ENCODE measurements at regions of chr14 and their contacts with region 1.

Region 1: GRCh38 chr14:68307014-68307789 is 485.7 kb downstream of the ZFP36L1 start:
- DNase-seq: no peak
- ATAC-seq: no peak
- H3K4me3 ChIP-seq: no peak overlapping the region; the same call in 1 of the 2 replicates
- H3K27ac ChIP-seq: peak overlapping the region; percentile 98
- H3K4me1 ChIP-seq: peaks cover 53% of the 10 kb centered on the region
- H3K27me3 ChIP-seq: no peaks in the 10 kb centered on the region
- CTCF ChIP-seq: no peak
- EP300 ChIP-seq: no peak
- POLR2A ChIP-seq: no peak
- RAD21 ChIP-seq: no peak

Region 2: GRCh38 chr14:68274725-68275124 is 32.5 kb before region 1 on chr14:
- CTCF ChIA-PET with region 1: interaction called, 15 read pairs
- POLR2A ChIA-PET with region 1: interaction called, 141 read pairs
- RAD21 ChIA-PET with region 1: interaction called, 343 read pairs
- SMC1A ChIA-PET with region 1: interaction called, 115 read pairs
- in situ Hi-C with region 1: no loop called
- intact Hi-C with region 1: loop called (anchors 5 kb)
- DNase-seq: no peak
- ATAC-seq: no peak
- H3K4me3 ChIP-seq: no peak overlapping the region
- H3K27ac ChIP-seq: peak overlapping the region; percentile 91
- H3K4me1 ChIP-seq: peaks cover 78% of the 10 kb centered on the region
- H3K27me3 ChIP-seq: no peaks in the 10 kb centered on the region
- CTCF ChIP-seq: peak in 1 of 3 experiments; percentile 22; a peak in 1 of 6 replicates
- EP300 ChIP-seq: no peak
- POLR2A ChIP-seq: no peak
- RAD21 ChIP-seq: 0 out of 2 replicates have a peak, but pooled peaks have one; percentile 21

Region 3: GRCh38 chr14:68318828-68319227 is 11.6 kb after region 1 on chr14:
- CTCF ChIA-PET with region 1: interaction called, 6 read pairs
- POLR2A ChIA-PET with region 1: interaction called, 19 read pairs
- RAD21 ChIA-PET with region 1: interaction called, 9 read pairs
- SMC1A ChIA-PET with region 1: interaction called, 36 read pairs
- in situ Hi-C with region 1: no loop called
- intact Hi-C with region 1: no loop called
- DNase-seq: no peak
- ATAC-seq: peak; percentile 49
- H3K4me3 ChIP-seq: no peak overlapping the region
- H3K27ac ChIP-seq: no peak overlapping the region
- H3K4me1 ChIP-seq: peaks cover 54% of the 10 kb centered on the region
- H3K27me3 ChIP-seq: no peaks in the 10 kb centered on the region
- CTCF ChIP-seq: no peak; a peak in 1 of 6 replicates
- EP300 ChIP-seq: peak in 1 of 2 experiments; percentile 23; a peak in 1 of 4 replicates
- POLR2A ChIP-seq: no peak
- RAD21 ChIP-seq: no peak

Region 4: GRCh38 chr14:68359837-68360552 is 52.8 kb after region 1 on chr14:
- CTCF ChIA-PET with region 1: no interaction called
- POLR2A ChIA-PET with region 1: interaction called, 9 read pairs
- RAD21 ChIA-PET with region 1: interaction called, 13 read pairs
- SMC1A ChIA-PET with region 1: interaction called, 68 read pairs
- in situ Hi-C with region 1: no loop called
- intact Hi-C with region 1: no loop called
- DNase-seq: no peak
- ATAC-seq: peak; percentile 47
- H3K4me3 ChIP-seq: no peak overlapping the region
- H3K27ac ChIP-seq: peak overlapping the region; percentile 82
- H3K4me1 ChIP-seq: peaks cover 33% of the 10 kb centered on the region
- H3K27me3 ChIP-seq: no peaks in the 10 kb centered on the region
- CTCF ChIP-seq: no peak
- EP300 ChIP-seq: no peak
- POLR2A ChIP-seq: no peak
- RAD21 ChIP-seq: no peak

Region 5: GRCh38 chr14:68408680-68409079 is 101.5 kb after region 1 on chr14:
- CTCF ChIA-PET with region 1: interaction called, 7 read pairs
- POLR2A ChIA-PET with region 1: interaction called, 13 read pairs
- RAD21 ChIA-PET with region 1: interaction called, 197 read pairs
- SMC1A ChIA-PET with region 1: interaction called, 44 read pairs
- in situ Hi-C with region 1: no loop called
- intact Hi-C with region 1: loop called (anchors 2 kb)
- DNase-seq: no peak
- ATAC-seq: peak; percentile 42
- H3K4me3 ChIP-seq: no peak overlapping the region
- H3K27ac ChIP-seq: no peak overlapping the region
- H3K4me1 ChIP-seq: peaks cover 39% of the 10 kb centered on the region
- H3K27me3 ChIP-seq: no peaks in the 10 kb centered on the region
- CTCF ChIP-seq: peak; percentile 25 to 54 (median 33); a peak in 5 of 6 replicates
- EP300 ChIP-seq: no peak
- POLR2A ChIP-seq: no peak
- RAD21 ChIP-seq: peak; percentile 67

Measured in GM12878 (cell line).